CD4-positive, alpha-beta T cell (primary cell): ENCODE measurements at regions of chr2 and their contacts with region 1.

Region 1: DNA sequence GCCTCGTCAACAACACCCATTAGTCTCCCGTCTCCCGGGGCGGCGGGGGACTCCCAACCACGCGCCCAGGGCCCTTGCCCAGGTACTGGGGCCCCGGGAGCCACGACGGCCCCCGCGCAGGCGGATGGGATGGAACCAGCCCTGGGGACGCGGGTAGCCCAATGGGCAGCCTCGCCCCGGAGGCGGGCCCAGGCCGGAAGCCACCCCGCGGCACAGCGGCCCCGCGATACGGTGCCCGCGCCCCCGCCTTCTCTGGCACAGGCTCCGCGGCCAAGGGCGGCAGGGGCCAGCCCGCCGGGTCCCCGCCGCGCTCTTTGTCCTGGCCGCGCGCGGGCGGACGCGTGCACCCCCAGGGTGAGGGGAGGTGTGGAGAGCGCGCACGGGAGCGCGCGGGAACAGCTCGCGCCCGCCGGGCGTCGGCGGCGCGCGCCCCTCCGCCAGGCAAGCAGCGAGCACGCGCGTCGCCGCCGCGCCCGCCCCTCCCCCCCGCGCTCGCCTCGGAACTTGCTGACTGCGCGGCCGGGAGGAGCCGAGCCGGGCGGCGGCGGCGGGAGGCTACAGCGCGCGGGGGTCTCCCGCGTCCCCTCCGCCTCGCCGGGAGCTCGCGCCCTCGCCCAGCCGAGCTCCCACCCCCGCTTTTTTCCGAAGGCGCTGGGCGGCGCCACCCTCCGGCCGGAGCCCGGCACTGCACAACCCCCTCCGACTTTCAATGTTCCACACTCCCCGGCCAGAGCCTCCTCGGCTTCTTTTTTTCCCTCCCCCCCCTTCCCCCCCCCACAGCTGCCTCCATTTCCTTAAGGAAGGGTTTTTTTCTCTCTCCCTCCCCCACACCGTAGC is at the start of gene UBE2E3:
- DNase-seq: peak; percentile 62 to 90 (median 70)
- ATAC-seq: peak; percentile 77
- H3K4me3 ChIP-seq: peak within 1 kb of the TSS; percentile 77
- H3K4me3 Mint-ChIP-seq: peak within 1 kb of the TSS; percentile 94
- H3K27ac ChIP-seq: peak within 1 kb of the TSS in 1 of 2 donors; percentile 20
- H3K27ac Mint-ChIP-seq: peak within 1 kb of the TSS; percentile 92
- H3K4me1 ChIP-seq: peaks cover 17% of the 10 kb centered on the region
- H3K4me1 Mint-ChIP-seq: peaks cover 49% of the 10 kb centered on the region
- H3K27me3 ChIP-seq: no peaks in the 10 kb centered on the region
- H3K27me3 Mint-ChIP-seq: no peaks in the 10 kb centered on the region
- CTCF ChIP-seq: peak; percentile 39
- total RNA-seq, gene UBE2E3: 20.5 TPM

Region 2: GRCh38 chr2:180991365-180991764 is 11.0 kb after region 1 on chr2:
- CTCF ChIA-PET with region 1: interaction called, 7 read pairs
- POLR2A ChIA-PET with region 1: interaction called, 11 read pairs
- intact Hi-C with region 1: no loop called
- DNase-seq: peak in 1 of 14 experiments; percentile 11
- ATAC-seq: no peak
- H3K4me3 ChIP-seq: no peak overlapping the region
- H3K4me3 Mint-ChIP-seq: no peak overlapping the region
- H3K27ac ChIP-seq: no peak overlapping the region
- H3K27ac Mint-ChIP-seq: no peak overlapping the region
- H3K4me1 ChIP-seq: no peaks in the 10 kb centered on the region
- H3K4me1 Mint-ChIP-seq: peaks cover 33% of the 10 kb centered on the region
- H3K27me3 ChIP-seq: no peaks in the 10 kb centered on the region
- H3K27me3 Mint-ChIP-seq: no peaks in the 10 kb centered on the region
- CTCF ChIP-seq: no peak

Region 3: DNA sequence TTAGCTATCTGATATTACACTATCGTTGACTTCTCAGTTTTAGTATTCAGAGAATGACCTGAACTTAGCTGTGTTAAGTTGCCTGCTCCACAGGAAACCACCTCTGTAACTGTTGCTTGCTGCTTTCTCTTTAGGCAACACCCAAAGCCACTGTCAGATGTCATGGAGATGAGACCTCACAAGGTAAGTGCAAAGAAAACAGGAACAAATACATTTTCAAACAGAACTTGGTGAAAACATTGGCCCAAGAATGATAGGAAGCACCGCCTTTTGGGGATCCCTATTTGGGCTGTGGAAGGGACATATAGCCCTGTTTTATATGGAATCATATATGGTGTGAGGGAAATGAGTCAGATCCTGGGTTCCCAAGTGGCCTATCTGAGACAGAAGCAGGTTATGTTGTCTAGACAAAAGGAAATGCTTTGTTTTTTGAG is 143.5 kb after region 1 on chr2:
- CTCF ChIA-PET with region 1: no interaction called
- POLR2A ChIA-PET with region 1: interaction called, 11 read pairs
- intact Hi-C with region 1: no loop called
- DNase-seq: peak in 13 of 14 experiments; percentile 29 to 94 (median 44)
- ATAC-seq: peak; percentile 95
- H3K4me3 ChIP-seq: peak overlapping the region; percentile 35
- H3K4me3 Mint-ChIP-seq: peak overlapping the region; percentile 65
- H3K27ac ChIP-seq: peak overlapping the region; percentile 87 to 90
- H3K27ac Mint-ChIP-seq: peak overlapping the region; percentile 99
- H3K4me1 ChIP-seq: peaks cover 17% of the 10 kb centered on the region
- H3K4me1 Mint-ChIP-seq: peaks cover 74% of the 10 kb centered on the region
- H3K27me3 ChIP-seq: no peaks in the 10 kb centered on the region
- H3K27me3 Mint-ChIP-seq: no peaks in the 10 kb centered on the region
- CTCF ChIP-seq: no peak

Region 4: DNA sequence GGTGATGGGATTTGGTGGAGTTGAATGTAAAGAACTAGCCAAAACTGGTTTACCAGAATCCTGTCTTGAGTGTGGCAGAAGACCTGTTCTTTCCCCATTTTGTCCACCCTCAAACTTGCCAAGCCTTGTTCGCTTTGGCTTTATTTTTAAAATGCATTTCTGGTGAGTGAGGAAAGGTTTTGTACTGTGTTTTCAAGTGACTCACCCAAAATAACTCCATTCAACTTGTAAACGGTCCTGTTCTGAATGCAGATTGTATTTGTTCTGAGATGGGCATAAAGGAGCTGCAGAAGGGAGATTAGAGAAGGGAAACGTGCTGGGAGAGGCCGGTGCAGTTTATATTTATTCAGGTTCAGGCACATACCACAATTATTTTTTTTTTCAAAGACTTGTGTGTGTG is 905.9 kb after region 1 on chr2:
- CTCF ChIA-PET with region 1: no interaction called
- POLR2A ChIA-PET with region 1: interaction called, 21 read pairs
- intact Hi-C with region 1: loop called in 1 of 2 experiments (anchors 5 kb)
- DNase-seq: no peak
- ATAC-seq: no peak
- H3K4me3 ChIP-seq: no peak overlapping the region
- H3K4me3 Mint-ChIP-seq: no peak overlapping the region
- H3K27ac ChIP-seq: no peak overlapping the region
- H3K27ac Mint-ChIP-seq: no peak overlapping the region
- H3K4me1 ChIP-seq: peaks cover 1% of the 10 kb centered on the region
- H3K4me1 Mint-ChIP-seq: peaks cover 2% of the 10 kb centered on the region
- H3K27me3 ChIP-seq: peaks cover 4 to 25% of the 10 kb centered on the region in 2 experiments
- H3K27me3 Mint-ChIP-seq: peaks cover 49% of the 10 kb centered on the region
- CTCF ChIP-seq: no peak

Region 5: DNA sequence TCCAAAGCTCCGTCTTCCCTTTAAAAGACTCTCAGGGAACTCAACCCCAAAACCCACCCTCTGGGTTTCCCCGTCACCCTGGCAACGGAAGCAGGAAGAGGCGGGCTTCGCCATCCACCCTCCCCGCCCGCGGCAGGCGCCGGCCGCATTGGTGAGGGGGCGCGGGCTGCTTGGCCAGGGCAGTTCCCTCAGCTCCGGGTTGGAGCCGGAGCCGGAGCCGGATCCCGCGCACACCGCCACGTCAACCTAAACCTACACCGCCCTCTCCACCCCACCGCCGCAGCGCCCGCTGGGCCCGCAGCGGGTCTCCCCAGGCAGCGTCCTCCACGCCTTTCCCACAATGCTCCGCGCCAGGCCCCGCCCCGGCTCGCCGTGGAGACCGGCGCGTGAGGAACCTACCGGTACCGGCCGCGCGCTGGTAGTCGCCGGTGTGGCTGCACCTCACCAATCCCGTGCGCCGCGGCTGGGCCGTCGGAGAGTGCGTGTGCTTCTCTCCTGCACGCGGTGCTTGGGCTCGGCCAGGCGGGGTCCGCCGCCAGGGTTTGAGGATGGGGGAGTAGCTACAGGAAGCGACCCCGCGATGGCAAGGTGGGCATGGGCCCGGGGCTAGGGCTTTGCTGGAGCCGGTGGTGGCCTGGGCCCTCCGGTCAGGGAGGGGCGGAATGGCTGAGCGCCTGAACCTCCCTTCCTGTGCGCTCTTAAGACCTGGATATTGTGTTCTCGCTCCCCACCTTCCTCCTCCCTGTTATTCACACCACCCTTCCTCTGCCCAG is 1735.8 kb after region 1 on chr2 and contains the start of gene DNAJC10:
- CTCF ChIA-PET with region 1: no interaction called
- POLR2A ChIA-PET with region 1: interaction called, 3 read pairs
- intact Hi-C with region 1: loop called in 1 of 2 experiments (anchors 10 kb)
- DNase-seq: peak; percentile 61 to 94 (median 81)
- ATAC-seq: peak; percentile 80
- H3K4me3 ChIP-seq: peak within 1 kb of the TSS; percentile 89
- H3K4me3 Mint-ChIP-seq: no peak within 1 kb of the TSS
- H3K27ac ChIP-seq: peak within 1 kb of the TSS; percentile 65 to 82
- H3K27ac Mint-ChIP-seq: no peak within 1 kb of the TSS
- H3K4me1 ChIP-seq: peaks cover 5% of the 10 kb centered on the region
- H3K4me1 Mint-ChIP-seq: no peaks in the 10 kb centered on the region
- H3K27me3 ChIP-seq: no peaks in the 10 kb centered on the region
- H3K27me3 Mint-ChIP-seq: peaks cover under 1% of the 10 kb centered on the region
- CTCF ChIP-seq: no peak
- total RNA-seq, gene DNAJC10: 34.0 to 34.1 TPM